Adrenal gland (tissue), 19 donors: ENCODE measurements at regions of chr5 and their contacts with region 1.

Region 1: DNA sequence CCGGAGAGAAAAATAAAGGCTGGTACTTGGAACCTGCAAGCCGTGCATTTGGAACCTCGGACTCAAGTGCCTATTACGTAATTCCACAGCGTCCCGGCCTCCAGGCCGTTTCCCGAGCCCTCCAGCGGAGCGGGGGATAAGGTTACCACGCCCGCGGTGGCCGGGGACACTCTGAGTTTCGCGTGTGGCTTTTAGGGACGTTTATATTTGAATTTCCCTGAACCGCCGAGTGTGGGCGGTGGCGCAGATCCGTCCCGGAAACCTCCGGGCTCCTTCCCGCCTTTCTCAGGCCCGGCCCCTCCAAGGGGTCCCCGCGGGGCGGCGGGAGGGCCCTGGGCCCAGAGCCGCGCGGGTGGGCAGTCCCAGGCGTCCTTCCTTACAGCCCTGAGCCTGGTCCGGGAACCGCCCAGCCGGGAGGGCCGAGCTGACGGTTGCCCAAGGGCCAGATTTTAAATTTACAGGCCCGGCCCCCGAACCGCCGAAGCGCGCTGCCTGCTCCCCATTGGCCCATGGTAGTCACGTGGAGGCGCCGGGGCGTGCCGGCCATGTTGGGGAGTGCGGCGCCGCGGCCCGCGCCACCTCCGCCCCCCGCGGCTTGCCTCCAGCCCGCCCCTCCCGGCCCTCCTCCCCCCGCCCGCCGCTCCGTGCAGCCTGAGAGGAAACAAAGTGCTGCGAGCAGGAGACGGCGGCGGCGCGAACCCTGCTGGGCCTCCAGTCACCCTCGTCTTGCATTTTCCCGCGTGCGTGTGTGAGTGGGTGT is at the start of gene LMNB1:
- DNase-seq: peak; percentile 92 to 96 (median 94)
- H3K4me3 ChIP-seq: peak within 1 kb of the TSS; percentile 22 to 90 (median 76)
- H3K27ac ChIP-seq: peak within 1 kb of the TSS; percentile 72 to 93 (median 85)
- H3K4me1 ChIP-seq: peaks cover 0 to 20% of the 10 kb centered on the region in 2 donors
- H3K27me3 ChIP-seq: no peaks in the 10 kb centered on the region
- CTCF ChIP-seq: peak in 3 of 6 experiments; percentile 15 to 18 (median 18)
- POLR2A ChIP-seq: peak in 1 of 2 donors; percentile 39
- total RNA-seq, gene LMNB1: 4.6 to 25.0 (median 6.1) TPM

Region 2: GRCh38 chr5:126348855-126349635 is 427.6 kb before region 1 on chr5:
- intact Hi-C with region 1: loop called in 1 of 2 experiments (anchors 10 kb)
- DNase-seq: no peak
- H3K4me3 ChIP-seq: no peak overlapping the region
- H3K27ac ChIP-seq: peak overlapping the region in 2 of 5 donors; percentile 7 to 34
- H3K4me1 ChIP-seq: no peaks in the 10 kb centered on the region
- H3K27me3 ChIP-seq: no peaks in the 10 kb centered on the region
- CTCF ChIP-seq: no peak
- POLR2A ChIP-seq: no peak

Region 3: GRCh38 chr5:126544087-126544740 is 232.5 kb before region 1 on chr5:
- intact Hi-C with region 1: loop called in 1 of 2 experiments (anchors 10 kb)
- DNase-seq: peak in 6 of 7 donors; percentile 24 to 69 (median 38)
- H3K4me3 ChIP-seq: no peak overlapping the region
- H3K27ac ChIP-seq: no peak overlapping the region
- H3K4me1 ChIP-seq: peaks cover 0 to 2% of the 10 kb centered on the region in 2 donors
- H3K27me3 ChIP-seq: no peaks in the 10 kb centered on the region
- CTCF ChIP-seq: peak; percentile 38 to 48 (median 40)
- POLR2A ChIP-seq: no peak

Region 4: GRCh38 chr5:126656396-126657007 is 120.2 kb before region 1 on chr5:
- intact Hi-C with region 1: loop called in 1 of 2 experiments (anchors 5 kb)
- DNase-seq: peak in 4 of 7 donors; percentile 14 to 27 (median 24)
- H3K4me3 ChIP-seq: no peak overlapping the region
- H3K27ac ChIP-seq: no peak overlapping the region
- H3K4me1 ChIP-seq: peaks cover 0 to 9% of the 10 kb centered on the region in 2 donors
- H3K27me3 ChIP-seq: no peaks in the 10 kb centered on the region
- CTCF ChIP-seq: peak; percentile 67 to 88 (median 76)
- POLR2A ChIP-seq: no peak

Region 5: DNA sequence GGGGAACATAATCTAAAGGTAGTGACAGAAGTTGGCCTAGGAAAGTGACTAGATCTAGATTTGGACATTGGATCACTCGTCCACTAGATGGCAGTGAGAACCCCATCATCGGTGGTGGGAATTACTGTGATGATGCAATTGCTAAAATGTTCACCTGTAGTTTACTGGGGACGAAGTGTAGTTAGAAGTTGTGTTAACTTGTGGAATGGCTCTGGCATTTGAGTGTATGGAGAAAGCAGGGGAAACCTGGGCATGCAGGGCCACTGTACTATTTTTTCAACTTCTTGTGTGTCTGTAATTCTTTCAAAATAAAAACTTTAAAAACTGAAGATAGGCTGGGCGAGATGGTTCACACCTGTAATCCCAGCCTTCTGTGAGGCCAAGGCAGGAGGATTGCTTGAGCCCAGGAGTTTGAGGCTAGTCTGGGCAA is 100.5 kb before region 1 on chr5:
- intact Hi-C with region 1: loop called (anchors 2 to 5 kb)
- DNase-seq: peak; percentile 41 to 73 (median 55)
- H3K4me3 ChIP-seq: no peak overlapping the region
- H3K27ac ChIP-seq: no peak overlapping the region
- H3K4me1 ChIP-seq: no peaks in the 10 kb centered on the region
- H3K27me3 ChIP-seq: no peaks in the 10 kb centered on the region
- CTCF ChIP-seq: peak; percentile 57 to 88 (median 82)
- POLR2A ChIP-seq: no peak

Region 6: DNA sequence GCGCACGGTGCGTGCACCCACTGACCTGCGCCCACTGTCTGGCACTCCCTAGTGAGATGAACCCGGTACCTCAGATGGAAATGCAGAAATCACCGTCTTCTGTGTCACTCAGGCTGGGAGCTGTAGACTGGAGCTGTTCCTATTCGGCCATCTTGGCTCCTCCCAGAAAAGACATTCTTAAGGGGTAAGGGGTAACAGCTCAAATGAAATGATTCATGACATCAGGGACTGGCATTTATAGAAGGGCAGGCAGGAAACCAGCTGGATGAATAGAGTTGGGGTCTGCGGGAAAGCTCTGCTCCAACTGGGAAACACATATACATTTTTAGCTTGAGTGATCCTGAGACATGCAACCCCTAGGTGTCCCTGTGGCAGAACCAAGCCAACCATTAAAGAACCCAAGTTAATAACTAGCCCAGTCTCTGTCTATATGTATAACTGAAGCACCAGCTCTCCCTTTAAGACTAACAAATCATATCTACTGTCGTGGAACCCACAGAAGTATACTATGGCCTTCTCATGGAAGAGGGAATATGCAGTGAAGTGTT is 119.6 kb after region 1 on chr5:
- intact Hi-C with region 1: no loop called
- DNase-seq: no peak
- H3K4me3 ChIP-seq: no peak overlapping the region
- H3K27ac ChIP-seq: no peak overlapping the region
- H3K4me1 ChIP-seq: no peaks in the 10 kb centered on the region
- H3K27me3 ChIP-seq: no peaks in the 10 kb centered on the region
- CTCF ChIP-seq: no peak
- POLR2A ChIP-seq: no peak